CD4-positive, alpha-beta memory T cell (primary cell): ENCODE measurements at regions of chr16 and their contacts with region 1.

Region 1: DNA sequence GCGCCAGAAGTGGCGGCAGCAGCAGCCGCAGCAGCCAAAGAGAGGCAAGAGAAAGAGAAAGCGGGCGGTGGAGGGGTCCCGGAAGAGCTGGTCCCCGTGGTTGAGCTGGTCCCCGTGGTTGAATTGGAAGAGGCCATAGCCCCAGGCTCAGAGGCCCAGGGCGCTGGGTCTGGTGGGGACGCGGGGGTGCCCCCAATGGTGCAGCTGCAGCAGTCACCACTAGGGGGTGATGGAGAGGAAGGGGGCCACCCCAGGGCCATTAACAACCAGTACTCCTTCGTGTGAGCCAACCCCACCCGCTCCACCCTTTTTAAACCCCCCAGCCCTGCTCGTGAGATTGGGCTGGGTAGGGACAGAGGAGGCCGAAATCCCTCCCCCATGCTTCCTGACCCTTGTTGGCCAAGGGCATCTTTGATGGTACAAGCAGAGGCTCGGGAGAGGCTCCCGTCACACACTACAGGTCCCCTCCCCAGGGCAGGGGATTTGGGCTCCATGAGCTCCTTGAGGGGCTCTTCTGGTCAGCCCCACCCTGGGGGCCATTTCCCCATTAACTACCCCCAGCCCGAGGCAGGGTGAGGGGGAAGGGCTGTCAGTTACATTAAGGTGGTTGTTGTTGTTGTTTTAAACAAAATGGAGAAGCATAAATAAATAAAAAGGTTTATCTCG is 4.6 kb upstream of the ATP2A1 start:
- DNase-seq: peak in 4 of 5 donors; percentile 55 to 60 (median 56)
- H3K4me3 ChIP-seq: no peak overlapping the region
- H3K4me3 Mint-ChIP-seq: no peak overlapping the region
- H3K27ac ChIP-seq: no peak overlapping the region
- H3K27ac Mint-ChIP-seq: peak overlapping the region in 2 of 7 donors; percentile 53 to 57
- H3K4me1 ChIP-seq: no peaks in the 10 kb centered on the region
- H3K4me1 Mint-ChIP-seq: peaks cover 0 to 3% (median 1%) of the 10 kb centered on the region in 4 donors
- H3K27me3 ChIP-seq: no peaks in the 10 kb centered on the region
- H3K27me3 Mint-ChIP-seq: no peaks in the 10 kb centered on the region

Region 2: DNA sequence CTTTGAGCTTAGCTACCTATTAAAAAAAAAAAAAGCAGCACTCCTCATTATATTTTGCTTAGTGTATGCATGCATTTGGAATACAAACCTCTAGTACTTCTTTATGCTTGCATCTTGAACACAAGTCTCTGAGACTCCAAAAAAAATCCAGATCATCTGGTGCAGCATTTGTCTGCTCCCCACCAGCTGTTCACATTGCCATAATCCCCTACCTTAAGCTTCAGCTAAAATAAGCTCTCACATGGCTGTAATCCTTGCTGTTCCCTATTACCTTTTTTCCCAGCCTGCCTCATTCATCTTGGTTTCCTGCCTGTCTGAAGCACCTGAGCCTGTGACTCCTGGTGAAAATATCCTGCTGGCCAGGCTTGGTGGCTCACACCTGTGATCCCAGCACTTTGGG is 69.6 kb after region 1 on chr16:
- CTCF ChIA-PET with region 1: interaction called, 65 read pairs
- POLR2A ChIA-PET with region 1: no interaction called
- intact Hi-C with region 1: loop called (anchors 1 kb)
- DNase-seq: no peak
- H3K4me3 ChIP-seq: no peak overlapping the region
- H3K4me3 Mint-ChIP-seq: no peak overlapping the region
- H3K27ac ChIP-seq: no peak overlapping the region
- H3K27ac Mint-ChIP-seq: peak overlapping the region in 1 of 7 donors; percentile 53
- H3K4me1 ChIP-seq: peaks cover 9% of the 10 kb centered on the region
- H3K4me1 Mint-ChIP-seq: peaks cover 6 to 9% (median 7%) of the 10 kb centered on the region in 4 donors
- H3K27me3 ChIP-seq: no peaks in the 10 kb centered on the region
- H3K27me3 Mint-ChIP-seq: no peaks in the 10 kb centered on the region

Region 3: DNA sequence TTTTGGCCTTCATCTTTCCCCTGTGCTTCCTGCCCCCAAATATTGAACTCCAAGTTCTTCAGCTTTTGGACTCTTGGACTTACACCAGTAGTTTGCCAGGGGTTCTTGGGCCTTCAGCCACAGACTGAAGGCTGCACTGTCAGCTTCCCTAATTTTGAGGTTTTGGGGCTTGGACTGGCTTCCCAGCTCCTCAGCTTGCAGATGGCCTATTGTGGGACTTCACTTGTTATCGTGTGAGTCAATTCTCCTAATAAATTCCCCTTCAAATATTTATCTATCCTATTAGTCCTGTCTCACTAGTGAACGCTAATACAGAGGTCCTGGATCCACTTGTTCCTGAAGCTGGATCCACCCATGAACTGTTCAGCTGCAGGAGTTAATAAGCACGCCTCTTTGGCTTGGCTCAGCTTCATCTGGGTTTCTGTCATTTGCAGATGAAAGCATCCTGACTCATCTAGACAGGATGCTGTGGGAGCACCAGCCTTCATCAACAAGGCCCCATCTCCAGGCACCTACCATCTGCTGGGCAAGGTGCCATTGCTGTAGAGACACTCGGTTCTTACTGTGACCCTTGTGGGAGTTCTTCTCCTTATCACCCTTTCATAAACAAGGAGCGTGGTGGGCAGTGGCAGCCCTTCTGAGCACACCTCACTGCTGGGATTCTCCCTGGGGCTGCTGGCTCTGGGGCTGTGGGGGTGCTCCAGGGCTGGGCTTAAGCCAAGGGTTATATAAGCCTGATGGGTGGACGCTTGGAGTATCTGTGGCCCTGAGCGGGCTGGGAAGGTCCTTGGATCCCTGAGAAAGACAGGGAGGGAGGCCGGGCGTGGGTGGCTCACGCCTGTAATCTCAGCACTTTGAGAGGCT is 134.3 kb after region 1 on chr16:
- CTCF ChIA-PET with region 1: no interaction called
- POLR2A ChIA-PET with region 1: no interaction called
- intact Hi-C with region 1: no loop called
- DNase-seq: peak; percentile 64 to 84 (median 70)
- H3K4me3 ChIP-seq: peak overlapping the region in 1 of 2 donors; percentile 29
- H3K4me3 Mint-ChIP-seq: peak overlapping the region; percentile 10 to 89 (median 77)
- H3K27ac ChIP-seq: peak overlapping the region; percentile 12
- H3K27ac Mint-ChIP-seq: peak overlapping the region; percentile 83 to 99 (median 96)
- H3K4me1 ChIP-seq: peaks cover 58% of the 10 kb centered on the region
- H3K4me1 Mint-ChIP-seq: peaks cover 30 to 63% (median 46%) of the 10 kb centered on the region in 4 donors
- H3K27me3 ChIP-seq: no peaks in the 10 kb centered on the region
- H3K27me3 Mint-ChIP-seq: no peaks in the 10 kb centered on the region